ENCODE measurements at regions of chr5 and their contacts with region 1.

Region 1: GRCh38 chr5:142713121-142713706 is 27.3 kb upstream of the FGF1 start:
- DNase-seq: no peak
- H3K4me3 ChIP-seq: peak overlapping the region; percentile 63
- H3K27me3 ChIP-seq: peaks cover 3% of the 10 kb centered on the region
- CTCF ChIP-seq: peak; percentile 76

Region 2: DNA sequence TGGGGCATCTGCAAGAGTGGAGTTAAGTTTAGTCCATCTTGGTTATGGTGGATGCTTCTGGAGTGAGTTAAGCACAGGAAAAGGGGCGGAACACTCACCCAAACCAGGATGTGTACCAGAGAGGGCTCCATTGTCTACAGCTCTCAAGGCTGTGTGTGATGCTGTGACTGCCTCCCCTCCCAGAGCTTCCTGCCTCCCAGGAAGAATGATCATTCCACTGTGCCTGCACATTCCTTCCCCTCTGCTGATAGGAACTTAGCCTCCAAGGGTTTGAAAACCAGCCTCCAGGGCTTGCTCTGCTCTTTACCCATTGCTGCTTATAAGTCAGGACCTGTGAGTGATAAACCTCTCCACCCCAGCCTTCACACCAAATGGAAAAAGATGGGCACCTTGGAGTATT is 228.4 kb before region 1 on chr5:
- CTCF ChIA-PET with region 1: no interaction called
- POLR2A ChIA-PET with region 1: no interaction called
- DNase-seq: no peak
- H3K4me3 ChIP-seq: no peak overlapping the region
- H3K27me3 ChIP-seq: no peaks in the 10 kb centered on the region
- CTCF ChIP-seq: no peak

Region 3: GRCh38 chr5:142611154-142611553 is 102.1 kb before region 1 on chr5:
- CTCF ChIA-PET with region 1: interaction called, 21 read pairs
- POLR2A ChIA-PET with region 1: no interaction called
- DNase-seq: no peak
- H3K4me3 ChIP-seq: no peak overlapping the region
- H3K27me3 ChIP-seq: no peaks in the 10 kb centered on the region
- CTCF ChIP-seq: peak; percentile 96

Region 4: DNA sequence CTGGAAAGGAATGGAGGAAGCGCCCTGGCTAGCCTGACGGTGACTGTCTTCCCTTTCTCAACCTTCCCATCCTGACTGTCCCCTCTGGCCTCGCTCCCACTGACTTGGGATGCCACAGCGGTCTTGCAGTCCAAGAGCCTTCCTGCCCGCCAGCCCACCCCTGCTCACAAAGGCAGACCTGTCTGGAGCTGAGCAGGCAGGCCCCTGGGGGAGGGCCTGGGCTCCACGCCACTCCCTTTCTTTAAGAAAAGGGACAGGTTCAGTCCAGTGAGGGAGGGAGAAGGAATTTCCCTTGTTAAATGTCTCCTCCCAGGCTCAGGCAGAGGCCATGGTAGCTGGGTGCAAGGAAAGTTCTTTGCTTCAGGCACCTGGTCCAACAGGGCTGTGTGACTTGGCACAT is 45.4 kb before region 1 on chr5:
- CTCF ChIA-PET with region 1: interaction called, 10 read pairs
- POLR2A ChIA-PET with region 1: no interaction called
- DNase-seq: no peak
- H3K4me3 ChIP-seq: no peak overlapping the region
- H3K27me3 ChIP-seq: no peaks in the 10 kb centered on the region
- CTCF ChIP-seq: no peak

Region 5: GRCh38 chr5:142726188-142726731 is 13.0 kb after region 1 on chr5:
- CTCF ChIA-PET with region 1: interaction called, 30 read pairs
- POLR2A ChIA-PET with region 1: no interaction called
- DNase-seq: peak; percentile 77
- H3K4me3 ChIP-seq: no peak overlapping the region
- H3K27me3 ChIP-seq: no peaks in the 10 kb centered on the region
- CTCF ChIP-seq: no peak

Region 6: DNA sequence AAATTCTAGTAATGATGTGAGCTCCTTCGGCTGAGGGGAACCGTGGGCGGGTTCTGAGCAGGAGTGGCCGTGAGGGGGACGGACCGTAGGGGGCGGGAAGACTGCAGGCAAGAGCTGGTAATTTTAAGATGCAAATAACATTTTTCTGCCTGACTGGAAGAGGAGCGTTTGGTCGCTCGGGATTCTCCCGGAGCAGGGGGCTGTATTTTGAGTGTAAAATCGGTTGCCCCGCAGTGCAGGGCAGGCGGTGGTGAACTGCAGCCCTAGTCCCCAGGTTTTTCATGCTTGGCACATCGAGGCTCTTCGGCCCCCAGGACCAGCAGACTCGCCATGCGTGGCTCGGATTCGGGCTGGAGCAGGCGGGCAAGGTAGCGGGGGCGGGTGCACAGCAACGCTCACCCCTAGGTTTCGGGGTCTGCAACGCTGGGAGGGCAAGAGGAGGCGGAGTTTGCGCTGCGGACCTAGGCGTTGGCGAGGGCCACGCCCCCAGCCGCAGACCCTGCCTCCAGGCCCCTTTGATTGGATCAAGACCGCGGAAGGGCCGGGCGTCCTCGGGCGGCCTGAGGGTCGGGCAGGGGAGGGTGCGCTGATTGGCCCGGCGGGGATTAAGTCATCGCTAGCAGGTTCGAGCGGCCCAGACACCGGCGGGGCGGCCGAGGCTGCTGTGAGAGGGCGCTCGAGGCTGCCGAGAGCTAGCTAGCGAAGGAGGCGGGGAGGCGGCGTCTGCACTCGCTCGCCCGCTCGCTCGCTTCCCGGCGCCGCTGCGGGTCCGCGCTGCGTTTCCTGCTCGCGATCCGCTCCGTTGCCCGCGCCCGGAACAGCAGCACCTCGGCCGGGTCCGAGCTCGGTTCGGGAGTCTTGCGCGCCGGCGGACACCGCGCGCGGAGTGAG is 56.8 kb after region 1 on chr5 and contains the start of gene ARHGAP26:
- CTCF ChIA-PET with region 1: interaction called, 16 read pairs
- POLR2A ChIA-PET with region 1: no interaction called
- DNase-seq: peak; percentile 67
- H3K4me3 ChIP-seq: peak within 1 kb of the TSS; percentile 65
- H3K27me3 ChIP-seq: 0 out of 2 replicates have a peak, but pooled peaks cover 7% of the 10 kb centered on the region
- CTCF ChIP-seq: peak; percentile 47
- polyA plus RNA-seq, gene ARHGAP26: 4.8 TPM in 2 replicates

Region 7: DNA sequence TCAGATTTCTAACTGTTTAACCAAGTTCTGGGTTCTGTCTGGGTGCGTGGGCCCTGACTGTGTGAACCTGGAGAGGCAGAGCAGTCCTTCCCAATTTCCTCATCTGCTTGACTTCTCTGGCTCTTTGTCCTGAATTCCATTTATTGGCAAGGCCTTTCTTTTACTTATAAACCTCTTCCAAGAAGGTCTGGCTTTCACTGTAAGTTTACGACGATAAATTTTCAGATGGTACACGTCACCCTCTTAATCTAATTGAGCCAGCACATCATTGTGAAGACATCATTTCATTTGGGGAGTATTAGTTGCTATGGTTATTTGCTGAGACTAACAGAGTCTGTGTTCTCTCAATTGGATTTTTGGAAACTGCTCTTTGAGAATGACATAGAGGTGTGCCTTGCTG is 149.4 kb after region 1 on chr5:
- CTCF ChIA-PET with region 1: interaction called, 1,105 read pairs
- POLR2A ChIA-PET with region 1: no interaction called
- DNase-seq: no peak
- H3K4me3 ChIP-seq: no peak overlapping the region
- H3K27me3 ChIP-seq: peaks cover 2% of the 10 kb centered on the region
- CTCF ChIP-seq: no peak

Region 8: GRCh38 chr5:142969186-142969585 is 256.0 kb after region 1 on chr5:
- CTCF ChIA-PET with region 1: no interaction called
- POLR2A ChIA-PET with region 1: no interaction called
- DNase-seq: no peak
- H3K4me3 ChIP-seq: no peak overlapping the region
- H3K27me3 ChIP-seq: no peaks in the 10 kb centered on the region
- CTCF ChIP-seq: no peak

Measured in BJ (cell line).